Caco-2 (cell line): ENCODE measurements at regions of chr3 and their contacts with region 1.

Region 1: DNA sequence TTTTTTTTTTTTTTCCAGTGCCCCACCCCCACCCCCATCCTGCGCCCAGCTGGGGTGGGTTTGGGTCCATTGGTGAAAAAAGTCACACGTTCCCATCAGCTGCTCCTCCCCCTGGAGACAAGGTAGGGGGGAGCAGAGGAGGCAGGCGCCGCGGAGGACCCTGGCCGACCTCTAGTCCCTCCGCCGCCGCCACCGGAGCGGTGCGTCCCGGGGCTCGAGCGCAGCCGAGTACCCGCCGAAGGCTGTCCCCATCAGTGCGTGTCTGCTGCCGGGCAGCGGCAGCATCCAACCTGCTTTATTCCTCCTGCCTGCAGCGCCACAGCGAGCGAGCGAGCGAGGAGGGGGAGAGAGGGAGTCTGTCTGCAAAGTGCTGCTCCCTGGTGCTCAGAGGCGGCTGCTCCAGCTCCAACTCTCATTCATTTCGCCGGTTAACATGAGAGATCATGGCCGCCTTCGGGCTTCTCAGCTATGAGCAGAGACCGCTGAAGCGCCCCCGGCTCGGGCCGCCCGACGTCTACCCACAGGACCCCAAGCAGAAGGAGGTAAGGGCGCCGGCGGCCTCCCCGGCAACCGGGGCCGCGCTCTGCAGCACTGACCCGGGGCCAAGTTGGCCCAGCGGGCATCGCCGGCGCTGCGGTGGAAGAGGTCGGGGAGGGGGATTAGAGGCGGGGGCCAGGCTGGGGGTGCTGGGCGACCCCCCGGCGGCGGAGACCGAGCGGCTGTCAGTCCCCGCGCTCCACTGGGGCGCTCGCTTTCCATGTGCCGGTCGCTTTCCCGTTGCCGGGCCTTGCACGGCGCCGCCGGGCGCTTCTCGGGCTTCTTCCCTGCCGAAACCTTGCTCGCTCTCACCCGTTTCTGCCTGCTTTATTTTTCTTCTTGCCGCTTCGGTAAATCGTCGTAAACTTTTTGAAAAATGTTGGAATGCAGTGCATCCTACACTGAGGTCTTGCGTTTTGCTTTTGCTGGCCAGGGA is 1.3 kb downstream of the MED12L start:
- DNase-seq: peak; percentile 80 to 88
- H3K4me3 ChIP-seq: peak overlapping the region; percentile 75
- H3K4me3 Mint-ChIP-seq: peak overlapping the region; percentile 86
- H3K27ac Mint-ChIP-seq: peak overlapping the region; percentile 93
- H3K4me1 ChIP-seq: peaks cover 7% of the 10 kb centered on the region; the same call in 1 of the 2 replicates
- H3K4me1 Mint-ChIP-seq: peaks cover 20% of the 10 kb centered on the region
- H3K27me3 ChIP-seq: no peaks in the 10 kb centered on the region
- H3K27me3 Mint-ChIP-seq: no peaks in the 10 kb centered on the region
- CTCF ChIP-seq: peak; percentile 48 to 63

Region 2: DNA sequence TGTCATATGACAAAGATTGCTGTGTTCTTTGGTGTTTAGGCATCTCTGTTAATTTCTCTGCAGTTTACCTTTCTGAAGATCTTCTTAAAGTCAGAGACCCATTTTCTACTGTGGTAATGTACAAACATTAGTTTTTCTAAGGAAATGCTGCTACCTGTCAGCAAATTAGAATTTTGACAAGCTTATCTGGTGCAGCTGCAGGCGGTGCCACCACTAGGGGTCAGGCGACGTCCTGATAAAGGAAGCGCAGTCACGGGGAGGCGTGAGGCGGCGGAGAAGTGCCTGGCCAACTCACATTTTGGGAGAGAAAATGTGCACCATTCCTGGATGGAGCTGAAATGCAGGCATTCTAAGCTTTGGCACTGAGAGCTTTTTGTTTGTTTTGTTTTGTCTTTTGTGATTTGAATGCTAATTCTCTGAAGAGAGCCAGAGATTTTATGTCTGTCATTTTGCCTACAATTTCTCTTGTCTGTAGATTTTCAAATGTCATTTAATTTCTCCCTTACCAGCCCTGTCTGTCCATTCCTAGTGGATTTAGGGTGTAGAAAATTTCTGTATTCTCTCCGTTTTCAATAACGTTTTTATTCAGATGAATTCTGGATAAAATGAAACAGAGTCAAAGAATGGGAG is 298.9 kb before region 1 on chr3:
- CTCF ChIA-PET with region 1: interaction called, 3 read pairs
- POLR2A ChIA-PET with region 1: no interaction called
- intact Hi-C with region 1: loop called (anchors 10 kb)
- DNase-seq: peak; percentile 80 to 82
- H3K4me3 ChIP-seq: no peak overlapping the region
- H3K4me3 Mint-ChIP-seq: no peak overlapping the region
- H3K27ac Mint-ChIP-seq: no peak overlapping the region
- H3K4me1 ChIP-seq: no peaks in the 10 kb centered on the region
- H3K4me1 Mint-ChIP-seq: no peaks in the 10 kb centered on the region
- H3K27me3 ChIP-seq: no peaks in the 10 kb centered on the region
- H3K27me3 Mint-ChIP-seq: peaks cover 3% of the 10 kb centered on the region
- CTCF ChIP-seq: peak; percentile 92

Region 3: GRCh38 chr3:150875548-150875947 is 211.2 kb before region 1 on chr3:
- CTCF ChIA-PET with region 1: no interaction called
- POLR2A ChIA-PET with region 1: no interaction called
- intact Hi-C with region 1: no loop called
- DNase-seq: no peak
- H3K4me3 ChIP-seq: no peak overlapping the region
- H3K4me3 Mint-ChIP-seq: no peak overlapping the region
- H3K27ac Mint-ChIP-seq: no peak overlapping the region
- H3K4me1 ChIP-seq: no peaks in the 10 kb centered on the region
- H3K4me1 Mint-ChIP-seq: no peaks in the 10 kb centered on the region
- H3K27me3 ChIP-seq: no peaks in the 10 kb centered on the region
- H3K27me3 Mint-ChIP-seq: peaks cover 3% of the 10 kb centered on the region
- CTCF ChIP-seq: no peak

Region 4: DNA sequence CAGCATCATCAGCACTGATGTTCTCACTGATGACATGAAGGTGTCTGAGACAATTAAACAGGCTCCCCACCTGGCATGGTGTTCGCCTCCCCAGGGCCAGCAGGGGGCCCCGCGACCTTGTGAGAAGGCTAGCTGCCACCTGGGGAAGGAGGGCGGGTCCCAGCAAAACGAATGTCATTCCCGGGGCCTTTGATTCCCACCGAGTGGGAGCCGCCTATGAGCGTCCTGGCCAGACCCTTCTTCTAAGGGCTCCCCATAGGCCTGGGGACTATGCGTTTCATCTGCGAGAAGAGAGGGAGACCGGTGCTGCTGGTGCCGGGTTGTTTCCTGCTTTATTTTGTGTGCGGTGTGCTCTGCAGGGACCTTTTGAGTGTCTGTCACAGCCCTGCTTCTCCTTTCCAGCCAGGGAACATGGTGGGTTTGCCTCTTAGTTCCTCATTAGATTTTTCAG is 161.0 kb before region 1 on chr3:
- CTCF ChIA-PET with region 1: interaction called, 3 read pairs
- POLR2A ChIA-PET with region 1: no interaction called
- intact Hi-C with region 1: loop called (anchors 1 kb)
- DNase-seq: peak; percentile 65 to 79
- H3K4me3 ChIP-seq: no peak overlapping the region
- H3K4me3 Mint-ChIP-seq: peak overlapping the region; percentile 24
- H3K27ac Mint-ChIP-seq: no peak overlapping the region
- H3K4me1 ChIP-seq: no peaks in the 10 kb centered on the region
- H3K4me1 Mint-ChIP-seq: peaks cover 6% of the 10 kb centered on the region
- H3K27me3 ChIP-seq: no peaks in the 10 kb centered on the region
- H3K27me3 Mint-ChIP-seq: peaks cover 14% of the 10 kb centered on the region
- CTCF ChIP-seq: peak; percentile 80 to 86

Region 5: DNA sequence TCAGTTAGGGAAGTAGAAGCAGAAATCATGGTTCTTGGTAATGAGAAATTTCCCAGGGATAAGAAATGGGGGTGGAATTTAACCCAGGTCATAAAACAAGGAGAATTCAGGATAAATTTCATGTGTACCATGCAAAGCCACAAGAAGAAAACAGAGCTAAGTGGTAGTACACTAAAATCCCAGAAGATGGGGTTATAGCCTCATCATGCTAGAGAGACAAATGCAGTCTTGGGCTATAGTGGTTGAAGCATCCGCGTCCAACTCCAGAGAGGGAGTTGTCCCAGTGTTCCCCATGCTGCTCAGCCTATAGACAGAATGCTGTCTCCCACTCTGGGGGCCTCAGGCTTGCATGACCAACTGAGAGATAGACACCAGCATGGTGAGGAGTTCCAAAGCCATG is 78.1 kb before region 1 on chr3:
- CTCF ChIA-PET with region 1: interaction called, 13 read pairs
- POLR2A ChIA-PET with region 1: no interaction called
- intact Hi-C with region 1: loop called (anchors 2 kb)
- DNase-seq: peak in 1 of 2 experiments; percentile 47
- H3K4me3 ChIP-seq: no peak overlapping the region
- H3K4me3 Mint-ChIP-seq: no peak overlapping the region
- H3K27ac Mint-ChIP-seq: no peak overlapping the region
- H3K4me1 ChIP-seq: no peaks in the 10 kb centered on the region
- H3K4me1 Mint-ChIP-seq: no peaks in the 10 kb centered on the region
- H3K27me3 ChIP-seq: no peaks in the 10 kb centered on the region
- H3K27me3 Mint-ChIP-seq: no peaks in the 10 kb centered on the region
- CTCF ChIP-seq: peak; percentile 17 to 34

Region 6: DNA sequence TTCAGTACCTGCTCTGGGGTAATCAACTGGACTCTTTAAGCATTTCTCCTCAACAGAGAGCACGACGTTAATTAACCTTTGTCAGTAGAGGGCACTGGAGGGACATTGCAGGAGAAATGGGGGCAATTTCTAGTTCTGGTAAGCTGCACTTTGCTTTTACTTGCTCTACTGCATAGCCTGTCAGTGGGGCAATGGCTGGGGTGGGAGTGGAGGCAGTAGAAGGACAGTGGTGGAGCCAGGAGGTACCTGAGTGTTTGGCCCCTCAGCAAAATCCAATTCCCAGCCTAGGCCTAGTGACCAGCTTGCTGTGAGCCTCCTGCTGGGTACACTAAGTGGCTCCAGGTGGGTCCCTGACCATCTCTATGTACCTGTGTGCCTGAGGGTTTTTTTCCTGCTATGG is 19.6 kb before region 1 on chr3:
- CTCF ChIA-PET with region 1: interaction called, 5 read pairs
- POLR2A ChIA-PET with region 1: no interaction called
- intact Hi-C with region 1: loop called (anchors 1 kb)
- DNase-seq: peak; percentile 42 to 63
- H3K4me3 ChIP-seq: no peak overlapping the region
- H3K4me3 Mint-ChIP-seq: no peak overlapping the region
- H3K27ac Mint-ChIP-seq: no peak overlapping the region
- H3K4me1 ChIP-seq: no peaks in the 10 kb centered on the region
- H3K4me1 Mint-ChIP-seq: no peaks in the 10 kb centered on the region
- H3K27me3 ChIP-seq: no peaks in the 10 kb centered on the region
- H3K27me3 Mint-ChIP-seq: peaks cover 3% of the 10 kb centered on the region
- CTCF ChIP-seq: peak; percentile 55 to 57

Region 7: DNA sequence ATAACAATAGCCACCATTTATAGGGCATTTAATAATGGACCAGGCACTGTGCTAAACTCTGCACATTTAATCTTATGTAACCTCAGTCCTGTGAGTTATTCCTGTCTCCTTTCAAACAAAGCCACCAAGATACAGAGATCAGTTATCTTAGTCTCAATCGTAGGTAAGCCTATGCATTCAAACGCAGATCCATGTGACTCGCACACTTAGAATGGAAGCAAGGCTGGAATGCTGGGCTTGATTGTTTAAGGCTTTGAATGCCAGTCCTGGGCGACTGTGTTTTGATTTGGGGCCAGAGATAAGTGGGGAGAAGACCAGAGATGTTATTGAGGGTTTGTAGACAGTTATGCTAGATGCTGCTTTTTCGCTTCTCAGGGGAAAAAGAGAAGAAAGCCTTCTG is 20.9 kb after region 1 on chr3:
- CTCF ChIA-PET with region 1: interaction called, 12 read pairs
- POLR2A ChIA-PET with region 1: interaction called, 11 read pairs
- intact Hi-C with region 1: loop called (anchors 1 kb)
- DNase-seq: peak; percentile 64 to 65
- H3K4me3 ChIP-seq: no peak overlapping the region
- H3K4me3 Mint-ChIP-seq: peak overlapping the region; percentile 61
- H3K27ac Mint-ChIP-seq: peak overlapping the region; percentile 74
- H3K4me1 ChIP-seq: peaks cover 42% of the 10 kb centered on the region
- H3K4me1 Mint-ChIP-seq: peaks cover 12% of the 10 kb centered on the region
- H3K27me3 ChIP-seq: no peaks in the 10 kb centered on the region
- H3K27me3 Mint-ChIP-seq: no peaks in the 10 kb centered on the region
- CTCF ChIP-seq: no peak

Region 8: DNA sequence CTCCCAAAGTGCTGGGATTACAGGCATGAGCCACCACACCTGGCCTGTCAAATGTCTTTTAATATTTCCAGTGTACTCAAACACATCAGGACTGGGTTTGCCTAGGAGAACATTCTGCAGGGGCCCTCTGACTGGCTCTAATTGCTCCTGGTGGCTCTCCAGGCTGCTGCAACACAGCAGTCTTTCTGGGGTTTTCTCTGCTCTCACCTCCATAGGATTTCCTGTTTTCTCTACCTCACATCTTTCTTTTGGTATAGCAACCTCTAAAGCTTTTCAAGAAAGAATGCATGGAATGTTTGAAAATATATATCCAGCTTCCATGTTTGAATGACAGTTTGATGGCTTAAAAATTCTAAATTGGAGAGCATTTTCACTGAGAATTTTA is 457.4 kb after region 1 on chr3:
- CTCF ChIA-PET with region 1: no interaction called
- POLR2A ChIA-PET with region 1: no interaction called
- intact Hi-C with region 1: no loop called
- DNase-seq: no peak
- H3K4me3 ChIP-seq: no peak overlapping the region
- H3K4me3 Mint-ChIP-seq: no peak overlapping the region
- H3K27ac Mint-ChIP-seq: peak overlapping the region; percentile 51
- H3K4me1 ChIP-seq: peaks cover 15% of the 10 kb centered on the region
- H3K4me1 Mint-ChIP-seq: peaks cover 6% of the 10 kb centered on the region
- H3K27me3 ChIP-seq: no peaks in the 10 kb centered on the region
- H3K27me3 Mint-ChIP-seq: no peaks in the 10 kb centered on the region
- CTCF ChIP-seq: no peak